Activated CD4-positive, alpha-beta T cell treated with anti-CD3 and anti-CD28 coated beads for 36 hours (primary cell): ENCODE measurements at regions of chr7 and their contacts with region 1.

Region 1: DNA sequence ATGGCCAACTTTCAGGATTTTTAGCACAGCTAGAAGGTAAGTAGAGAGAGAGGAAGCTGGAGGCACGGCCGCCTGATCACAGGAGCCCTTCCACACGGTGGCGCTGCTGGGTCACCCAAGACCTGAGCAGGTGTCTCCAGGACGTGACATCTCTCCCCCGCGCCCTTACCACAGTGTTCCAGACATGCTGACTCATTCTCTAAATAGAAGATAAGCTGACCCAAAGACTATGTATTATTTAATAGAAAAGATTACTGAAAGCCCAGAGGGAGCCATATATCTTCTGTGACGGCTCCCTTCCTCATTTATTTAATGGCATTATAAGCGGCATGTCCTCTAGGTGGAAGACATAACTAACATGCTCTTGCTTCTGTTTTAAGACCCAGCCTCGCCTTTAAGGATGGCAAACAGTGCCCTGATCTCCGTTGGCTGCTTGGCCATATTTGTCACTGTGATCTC is 26.0 kb upstream of the MALSU1 start:
- DNase-seq: peak; percentile 96
- ATAC-seq: peak; percentile 97
- H3K4me3 Mint-ChIP-seq: peak overlapping the region; percentile 59
- H3K27ac Mint-ChIP-seq: peak overlapping the region; percentile 58
- H3K4me1 Mint-ChIP-seq: peaks cover 8% of the 10 kb centered on the region
- H3K27me3 Mint-ChIP-seq: peaks cover 4% of the 10 kb centered on the region

Region 2: GRCh38 chr7:23043441-23043840 is 229.7 kb before region 1 on chr7:
- CTCF ChIA-PET with region 1: no interaction called
- POLR2A ChIA-PET with region 1: no interaction called
- intact Hi-C with region 1: no loop called
- DNase-seq: no peak
- ATAC-seq: no peak
- H3K4me3 Mint-ChIP-seq: no peak overlapping the region
- H3K27ac Mint-ChIP-seq: no peak overlapping the region
- H3K4me1 Mint-ChIP-seq: no peaks in the 10 kb centered on the region
- H3K27me3 Mint-ChIP-seq: no peaks in the 10 kb centered on the region

Region 3: GRCh38 chr7:23261843-23262452 is 11.2 kb before region 1 on chr7:
- CTCF ChIA-PET with region 1: interaction called, 111 read pairs
- POLR2A ChIA-PET with region 1: no interaction called
- intact Hi-C with region 1: no loop called
- DNase-seq: peak; percentile 81
- ATAC-seq: peak; percentile 95
- H3K4me3 Mint-ChIP-seq: no peak overlapping the region
- H3K27ac Mint-ChIP-seq: no peak overlapping the region
- H3K4me1 Mint-ChIP-seq: peaks cover 4% of the 10 kb centered on the region
- H3K27me3 Mint-ChIP-seq: peaks cover 9% of the 10 kb centered on the region

Region 4: GRCh38 chr7:23347682-23348180 is 74.6 kb after region 1 on chr7:
- CTCF ChIA-PET with region 1: interaction called, 16 read pairs
- POLR2A ChIA-PET with region 1: no interaction called
- intact Hi-C with region 1: loop called in 1 of 2 experiments (anchors 1 kb)
- DNase-seq: peak; percentile 20
- ATAC-seq: peak; percentile 76
- H3K4me3 Mint-ChIP-seq: no peak overlapping the region
- H3K27ac Mint-ChIP-seq: peak overlapping the region; percentile 15
- H3K4me1 Mint-ChIP-seq: peaks cover 33% of the 10 kb centered on the region
- H3K27me3 Mint-ChIP-seq: peaks cover 4% of the 10 kb centered on the region

Region 5: DNA sequence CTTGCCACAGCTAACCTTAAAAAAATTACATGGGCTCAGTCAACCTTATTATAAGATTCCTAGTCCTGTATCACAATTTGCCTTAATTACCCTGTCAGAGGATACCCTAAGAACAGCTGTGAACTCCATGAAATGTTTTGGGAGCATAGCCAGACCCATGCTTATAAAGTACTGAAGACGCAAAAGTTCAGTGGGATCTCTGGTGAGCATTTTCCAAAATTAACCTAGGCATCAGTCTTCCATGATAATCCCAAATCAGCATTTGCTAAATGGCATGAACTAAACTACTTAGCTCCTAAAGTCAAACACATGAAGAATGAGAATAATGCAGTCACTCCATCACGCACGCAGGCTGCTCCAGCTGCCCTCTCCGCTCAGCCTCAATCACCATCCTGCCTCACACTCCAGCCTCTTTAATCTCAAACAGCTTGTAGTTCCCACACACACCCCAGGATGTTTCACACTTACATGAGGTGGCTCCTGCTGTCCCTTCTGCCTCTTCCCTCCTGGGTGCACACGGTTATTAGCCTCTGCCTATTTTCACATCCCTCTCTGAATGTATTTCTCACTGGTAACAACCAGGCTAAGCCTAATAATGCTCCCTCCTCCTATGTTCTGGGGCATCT is 181.8 kb after region 1 on chr7:
- CTCF ChIA-PET with region 1: interaction called, 10 read pairs
- POLR2A ChIA-PET with region 1: no interaction called
- intact Hi-C with region 1: no loop called
- DNase-seq: no peak
- ATAC-seq: no peak
- H3K4me3 Mint-ChIP-seq: no peak overlapping the region
- H3K27ac Mint-ChIP-seq: no peak overlapping the region
- H3K4me1 Mint-ChIP-seq: no peaks in the 10 kb centered on the region
- H3K27me3 Mint-ChIP-seq: peaks cover 37% of the 10 kb centered on the region

Region 6: GRCh38 chr7:23531794-23532489 is 258.8 kb after region 1 on chr7 and contains the start of gene TRA2A:
- CTCF ChIA-PET with region 1: interaction called, 23 read pairs
- POLR2A ChIA-PET with region 1: no interaction called
- intact Hi-C with region 1: loop called (anchors 5 kb)
- DNase-seq: peak; percentile 98
- ATAC-seq: peak; percentile 93
- H3K4me3 Mint-ChIP-seq: peak within 1 kb of the TSS; percentile 96
- H3K27ac Mint-ChIP-seq: peak within 1 kb of the TSS; percentile 100
- H3K4me1 Mint-ChIP-seq: peaks cover 41% of the 10 kb centered on the region
- H3K27me3 Mint-ChIP-seq: no peaks in the 10 kb centered on the region
- total RNA-seq, gene TRA2A: 86.8 to 143 TPM

Region 7: DNA sequence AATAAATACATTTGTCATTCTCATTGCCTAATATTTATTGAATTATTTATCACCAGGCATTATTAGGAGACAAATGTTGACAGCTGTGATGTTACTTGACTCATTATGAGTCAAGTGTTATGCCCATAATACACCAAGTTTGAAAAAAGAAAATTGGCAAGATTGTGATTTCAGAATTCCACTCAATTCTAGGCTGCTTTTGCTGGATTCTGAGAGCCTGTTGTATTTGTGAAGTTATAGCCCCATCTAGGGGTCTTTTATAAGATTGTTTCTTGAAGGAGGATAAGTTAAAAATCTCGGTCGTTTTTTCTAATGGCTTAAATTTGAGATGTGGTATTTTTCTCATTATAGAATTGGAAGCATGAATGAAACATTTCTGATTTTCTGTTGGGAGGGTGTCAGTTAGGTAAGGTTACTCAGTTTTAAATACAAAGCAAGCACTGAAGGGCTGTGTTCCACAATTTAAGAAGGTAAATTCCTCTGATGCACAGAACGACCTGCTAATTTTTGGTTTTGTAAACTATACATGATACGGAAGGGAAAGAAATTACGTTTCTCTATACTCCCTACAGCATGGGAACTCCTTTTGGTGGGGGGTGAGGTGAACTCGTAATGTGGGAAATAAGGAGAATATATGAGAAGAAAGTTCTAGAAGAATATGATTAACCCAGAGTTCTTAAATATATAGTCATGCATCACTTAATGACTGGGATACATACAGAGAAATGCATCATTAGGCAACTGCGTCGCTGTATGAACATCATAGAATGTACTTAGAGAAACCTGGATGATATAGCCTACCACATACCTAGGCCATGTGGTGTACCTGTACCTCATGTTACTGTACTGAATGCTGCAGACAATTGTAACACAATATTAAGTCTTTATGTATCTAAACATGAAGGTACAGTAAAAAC is 439.5 kb after region 1 on chr7:
- CTCF ChIA-PET with region 1: interaction called, 10 read pairs
- POLR2A ChIA-PET with region 1: no interaction called
- intact Hi-C with region 1: loop called (anchors 1 kb)
- DNase-seq: no peak
- ATAC-seq: peak; percentile 49
- H3K4me3 Mint-ChIP-seq: no peak overlapping the region
- H3K27ac Mint-ChIP-seq: no peak overlapping the region
- H3K4me1 Mint-ChIP-seq: no peaks in the 10 kb centered on the region
- H3K27me3 Mint-ChIP-seq: no peaks in the 10 kb centered on the region